ENCODE measurements at regions of chr3 and their contacts with region 1.

Region 1: GRCh38 chr3:39260957-39261356 is 18.9 kb downstream of the CX3CR1 start:
- DNase-seq: peak; percentile 71
- H3K4me3 Mint-ChIP-seq: peak overlapping the region; percentile 71
- H3K27ac Mint-ChIP-seq: peak overlapping the region; percentile 73
- H3K4me1 Mint-ChIP-seq: peaks cover 87% of the 10 kb centered on the region
- H3K27me3 Mint-ChIP-seq: peaks cover 2% of the 10 kb centered on the region

Region 2: GRCh38 chr3:38890426-38890825 is 370.5 kb before region 1 on chr3:
- intact Hi-C with region 1: no loop called
- DNase-seq: no peak
- H3K4me3 Mint-ChIP-seq: no peak overlapping the region
- H3K27ac Mint-ChIP-seq: no peak overlapping the region
- H3K4me1 Mint-ChIP-seq: no peaks in the 10 kb centered on the region
- H3K27me3 Mint-ChIP-seq: peaks cover 6% of the 10 kb centered on the region

Region 3: GRCh38 chr3:39107388-39108199 is 153.4 kb before region 1 on chr3 and contains the starts of genes GORASP1 and TTC21A:
- intact Hi-C with region 1: loop called (anchors 2 kb)
- DNase-seq: peak; percentile 65
- H3K4me3 Mint-ChIP-seq: peak within 1 kb of the TSS; percentile 93
- H3K27ac Mint-ChIP-seq: peak within 1 kb of the TSS; percentile 69
- H3K4me1 Mint-ChIP-seq: peaks cover 53% of the 10 kb centered on the region
- H3K27me3 Mint-ChIP-seq: peaks cover 7% of the 10 kb centered on the region
- total RNA-seq, gene GORASP1: 26.6 and 35.6 TPM in 2 replicates
- total RNA-seq, gene TTC21A: 0.83 and 1.0 TPM in 2 replicates

Region 4: GRCh38 chr3:39146984-39147591 is 113.9 kb before region 1 on chr3:
- intact Hi-C with region 1: loop called (anchors 1 kb)
- DNase-seq: peak; percentile 64
- H3K4me3 Mint-ChIP-seq: peak overlapping the region; percentile 94
- H3K27ac Mint-ChIP-seq: peak overlapping the region; percentile 97
- H3K4me1 Mint-ChIP-seq: peaks cover 69% of the 10 kb centered on the region
- H3K27me3 Mint-ChIP-seq: no peaks in the 10 kb centered on the region

Region 5: DNA sequence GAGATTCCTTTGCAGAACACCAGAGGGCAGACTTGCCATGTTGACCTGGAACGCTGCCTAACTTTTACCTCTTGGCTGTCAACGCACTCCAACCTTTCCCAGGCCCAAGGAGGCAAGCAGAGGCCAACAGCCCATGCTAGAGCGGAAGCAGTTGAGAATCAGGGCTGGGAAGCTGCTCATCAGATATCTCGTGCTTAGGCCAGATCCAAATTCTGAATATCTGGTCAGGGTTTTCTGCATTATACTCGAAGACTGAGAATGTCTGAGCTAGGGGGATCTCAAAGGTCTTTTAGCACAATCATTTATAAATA is 71.0 kb before region 1 on chr3:
- intact Hi-C with region 1: loop called (anchors 1 kb)
- DNase-seq: peak; percentile 46
- H3K4me3 Mint-ChIP-seq: no peak overlapping the region
- H3K27ac Mint-ChIP-seq: peak overlapping the region; percentile 61
- H3K4me1 Mint-ChIP-seq: peaks cover 22% of the 10 kb centered on the region
- H3K27me3 Mint-ChIP-seq: no peaks in the 10 kb centered on the region

Region 6: DNA sequence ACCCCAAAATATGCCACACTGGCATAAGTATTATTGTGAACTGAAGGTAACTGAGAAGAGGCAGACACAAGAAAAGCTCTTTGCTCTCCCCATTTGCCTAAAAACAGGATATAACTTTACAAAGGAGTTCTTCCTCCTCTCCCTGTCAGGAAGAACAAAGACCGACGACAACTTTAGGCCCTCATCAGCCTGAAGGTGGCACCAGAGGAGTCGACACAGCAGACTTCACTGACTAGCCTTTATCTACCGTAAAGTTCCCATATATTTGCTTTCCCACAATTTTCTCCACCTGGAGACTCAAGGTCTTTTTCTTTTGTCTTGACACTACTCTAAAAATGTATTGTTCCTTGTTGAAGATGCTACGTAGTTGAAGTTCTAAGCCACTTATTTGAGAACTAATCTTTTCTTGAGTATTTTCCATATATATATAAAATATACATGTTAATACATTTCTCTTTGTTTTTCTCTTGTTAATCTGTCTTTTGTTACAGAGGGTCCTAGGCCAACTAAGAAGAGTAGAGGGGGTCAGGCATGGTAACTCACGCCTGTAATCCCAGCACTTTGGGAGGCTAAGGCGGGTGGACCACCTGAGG is 52.4 kb before region 1 on chr3:
- intact Hi-C with region 1: loop called (anchors 1 kb)
- DNase-seq: no peak
- H3K4me3 Mint-ChIP-seq: no peak overlapping the region
- H3K27ac Mint-ChIP-seq: no peak overlapping the region
- H3K4me1 Mint-ChIP-seq: peaks cover 14% of the 10 kb centered on the region
- H3K27me3 Mint-ChIP-seq: peaks cover 26% of the 10 kb centered on the region

Region 7: DNA sequence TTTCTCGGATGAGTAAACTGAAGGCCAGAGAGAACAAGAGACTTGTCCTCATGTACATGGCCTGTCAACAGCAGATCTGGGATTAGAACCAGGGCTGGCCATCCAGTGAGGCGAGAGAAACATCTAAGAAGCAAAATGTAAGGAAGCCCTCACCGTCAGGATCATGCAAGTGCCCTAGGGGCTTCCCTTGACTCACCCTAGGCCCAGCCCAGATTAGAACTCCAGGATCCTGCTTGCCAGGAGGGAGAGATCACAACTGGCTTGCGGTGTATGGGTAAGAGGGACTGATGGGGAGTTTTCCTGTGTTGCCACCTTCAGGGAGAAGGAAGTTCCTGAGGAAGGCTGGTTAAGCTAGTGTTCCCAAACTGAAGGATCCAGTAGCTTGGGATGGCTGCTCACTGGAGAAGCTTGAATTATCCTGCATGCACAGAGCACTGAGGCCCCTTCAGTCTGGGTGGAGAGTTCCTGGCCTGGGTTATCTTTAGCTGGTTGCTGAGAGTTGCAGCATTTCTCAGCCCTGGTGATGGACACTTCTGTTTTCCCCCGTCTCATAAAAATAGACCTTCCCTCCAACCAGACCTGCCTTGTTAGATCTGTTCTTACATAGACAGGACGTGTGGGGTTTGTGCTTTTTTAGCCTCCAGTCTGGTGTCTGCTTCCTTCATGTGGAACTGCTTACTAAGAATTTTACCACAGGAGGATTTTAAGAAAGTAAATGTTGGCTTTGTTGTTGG is 40.4 kb before region 1 on chr3:
- intact Hi-C with region 1: loop called (anchors 2 kb)
- DNase-seq: peak; percentile 16
- H3K4me3 Mint-ChIP-seq: peak overlapping the region; percentile 43
- H3K27ac Mint-ChIP-seq: peak overlapping the region; percentile 25
- H3K4me1 Mint-ChIP-seq: peaks cover 61% of the 10 kb centered on the region
- H3K27me3 Mint-ChIP-seq: peaks cover 52% of the 10 kb centered on the region

Region 8: GRCh38 chr3:39234705-39235104 is 26.3 kb before region 1 on chr3:
- intact Hi-C with region 1: loop called (anchors 2 kb)
- DNase-seq: peak; percentile 35
- H3K4me3 Mint-ChIP-seq: peak overlapping the region; percentile 38
- H3K27ac Mint-ChIP-seq: no peak overlapping the region
- H3K4me1 Mint-ChIP-seq: peaks cover 38% of the 10 kb centered on the region
- H3K27me3 Mint-ChIP-seq: peaks cover 35% of the 10 kb centered on the region

Measured in activated T-helper 1 cell treated with anti-CD3 and anti-CD28 coated beads, Interleukin-12 subunit alpha, Interleukin-12 subunit beta, Interleukin-2, Interleukin-4 antibody, amounts not matched to agents 30 ng/mL and 10 ng/mL and 1 ng/mL, durations not matched to agents 14 hours and 24 hours and 36 hours (primary cell).